Sigmoid colon (tissue), 7 donors: ENCODE measurements at regions of chr18 and their contacts with region 1.

Region 1: GRCh38 chr18:79528846-79529245 is 133.1 kb downstream of the NFATC1 start:
- DNase-seq: peak; percentile 88
- H3K4me3 ChIP-seq: no peak overlapping the region
- H3K27ac ChIP-seq: peak overlapping the region in 2 of 4 donors; percentile 33
- H3K4me1 ChIP-seq: peaks cover 0 to 24% (median 21%) of the 10 kb centered on the region in 4 donors
- H3K27me3 ChIP-seq: peaks cover 0 to 17% (median 0%) of the 10 kb centered on the region in 3 donors
- CTCF ChIP-seq: peak; percentile 85 to 97 (median 89)
- EP300 ChIP-seq: no peak
- POLR2A ChIP-seq: no peak

Region 2: GRCh38 chr18:79378542-79379250 is 150.2 kb before region 1 on chr18:
- intact Hi-C with region 1: loop called (anchors 1 kb)
- DNase-seq: peak; percentile 90
- H3K4me3 ChIP-seq: no peak overlapping the region
- H3K27ac ChIP-seq: no peak overlapping the region
- H3K4me1 ChIP-seq: peaks cover 0 to 8% (median 4%) of the 10 kb centered on the region in 4 donors
- H3K27me3 ChIP-seq: no peaks in the 10 kb centered on the region
- CTCF ChIP-seq: peak; percentile 94 to 95 (median 94)
- EP300 ChIP-seq: no peak
- POLR2A ChIP-seq: no peak

Region 3: DNA sequence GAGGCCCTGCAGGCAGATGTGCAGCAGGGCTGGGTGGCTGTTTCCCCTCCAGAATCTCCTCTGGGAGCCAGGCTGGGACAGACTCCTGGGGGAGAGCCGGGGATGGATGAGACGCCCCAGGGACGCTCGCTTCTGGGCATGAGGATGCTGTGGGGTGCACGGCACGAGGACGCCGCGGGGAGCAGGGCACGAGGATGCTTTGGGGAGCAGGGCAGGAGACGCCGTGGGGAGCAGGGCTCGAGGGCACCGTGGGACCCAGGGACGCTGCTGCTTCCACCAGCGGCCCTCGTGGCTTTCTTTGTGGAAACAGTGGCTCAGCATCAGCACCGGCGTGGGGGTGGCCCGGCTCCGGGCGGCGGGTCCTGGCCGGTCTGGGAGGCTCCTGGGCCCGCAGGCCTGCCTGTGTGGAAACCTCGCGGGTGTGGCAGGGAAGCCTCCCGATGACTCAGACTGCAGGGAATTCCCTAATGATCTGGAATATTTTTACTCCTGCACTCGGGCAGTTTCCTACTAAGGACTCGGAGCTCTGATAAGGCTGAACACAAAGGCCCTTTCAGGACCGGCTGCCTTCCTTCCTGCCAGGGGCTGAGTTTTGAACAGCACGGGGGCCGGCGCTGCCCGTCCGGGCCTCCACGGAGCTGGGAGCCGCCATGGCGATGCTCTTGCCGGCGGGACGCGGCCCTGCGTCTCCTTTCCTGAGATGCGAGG is 70.6 kb before region 1 on chr18:
- intact Hi-C with region 1: loop called (anchors 5 kb)
- DNase-seq: peak; percentile 87
- H3K4me3 ChIP-seq: peak overlapping the region in 3 of 4 donors; percentile 2 to 30 (median 22)
- H3K27ac ChIP-seq: peak overlapping the region; percentile 59 to 83 (median 82)
- H3K4me1 ChIP-seq: peaks cover 0 to 36% (median 26%) of the 10 kb centered on the region in 4 donors
- H3K27me3 ChIP-seq: no peaks in the 10 kb centered on the region
- CTCF ChIP-seq: no peak
- EP300 ChIP-seq: no peak
- POLR2A ChIP-seq: no peak

Region 4: GRCh38 chr18:79644006-79644665 is 115.3 kb after region 1 on chr18:
- intact Hi-C with region 1: loop called (anchors 2 kb)
- DNase-seq: peak; percentile 79
- H3K4me3 ChIP-seq: no peak overlapping the region
- H3K27ac ChIP-seq: no peak overlapping the region
- H3K4me1 ChIP-seq: peaks cover 0 to 6% (median 0%) of the 10 kb centered on the region in 4 donors
- H3K27me3 ChIP-seq: peaks cover 0 to 5% (median 4%) of the 10 kb centered on the region in 3 donors
- CTCF ChIP-seq: peak; percentile 77 to 98 (median 92)
- EP300 ChIP-seq: no peak
- POLR2A ChIP-seq: no peak